WTC11 (cell line): ENCODE measurements at regions of chr18 and their contacts with region 1.

Region 1: GRCh38 chr18:24176727-24177416 is 38.0 kb downstream of the CABYR start:
- DNase-seq: peak; percentile 85
- ATAC-seq: peak; percentile 91
- H3K4me3 Mint-ChIP-seq: no peak overlapping the region
- H3K27ac Mint-ChIP-seq: peak overlapping the region; percentile 74; the same call in 1 of the 2 replicates
- H3K4me1 Mint-ChIP-seq: peaks cover 15% of the 10 kb centered on the region
- H3K27me3 Mint-ChIP-seq: no peaks in the 10 kb centered on the region
- CTCF ChIP-seq: peak; percentile 78

Region 2: DNA sequence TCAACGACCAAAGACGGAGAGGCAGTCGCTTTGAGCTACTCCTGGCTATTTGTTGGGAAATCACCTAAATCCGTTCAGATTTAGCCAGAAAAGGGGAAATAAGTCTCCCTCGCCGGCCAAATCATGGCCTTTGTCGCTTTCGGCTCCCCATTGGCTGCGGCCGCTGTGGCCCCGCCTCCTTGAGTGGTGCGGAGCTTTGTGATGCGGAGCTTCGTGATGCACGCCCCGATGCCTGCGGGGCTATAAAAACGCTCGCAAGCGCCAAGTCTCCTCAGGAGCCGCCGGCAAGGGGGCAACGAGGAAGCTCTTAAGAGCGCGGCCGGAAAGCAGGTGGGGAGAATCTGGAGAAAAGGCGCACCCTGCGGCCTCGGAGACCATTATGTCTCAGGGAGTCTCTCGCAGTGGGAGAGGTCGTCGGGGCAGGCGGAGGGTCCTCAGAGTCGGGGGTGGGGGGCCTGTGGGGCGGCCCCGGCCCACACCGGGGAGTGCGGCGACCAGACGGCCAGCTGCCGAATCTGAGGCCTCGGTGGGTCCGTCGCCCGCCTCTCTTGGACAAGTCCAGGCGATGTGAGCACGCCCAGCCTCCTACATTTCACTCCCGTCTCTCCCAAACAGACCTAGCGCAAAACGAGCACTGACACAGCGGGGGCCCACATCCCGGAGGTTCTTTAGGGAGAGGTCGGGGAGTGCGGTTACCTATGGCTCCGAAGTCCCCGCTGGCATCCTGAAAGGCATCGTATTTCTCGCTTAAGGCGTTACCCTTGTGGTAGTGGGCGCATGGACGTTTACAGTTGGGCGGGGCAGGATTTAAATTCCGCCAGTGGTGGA is 37.9 kb before region 1 on chr18 and contains the start of gene CABYR:
- CTCF ChIA-PET with region 1: interaction called, 20 read pairs
- POLR2A ChIA-PET with region 1: interaction called, 8 read pairs
- DNase-seq: peak; percentile 91
- ATAC-seq: peak; percentile 90
- H3K4me3 Mint-ChIP-seq: peak within 1 kb of the TSS; percentile 79
- H3K27ac Mint-ChIP-seq: peak within 1 kb of the TSS; percentile 98
- H3K4me1 Mint-ChIP-seq: peaks cover 34% of the 10 kb centered on the region
- H3K27me3 Mint-ChIP-seq: no peaks in the 10 kb centered on the region
- CTCF ChIP-seq: no peak
- total RNA-seq, gene CABYR: 12.9 to 19.3 TPM (median 16.1 TPM) in 3 replicates

Region 3: GRCh38 chr18:24189007-24189528 is 12.2 kb after region 1 on chr18:
- CTCF ChIA-PET with region 1: interaction called, 50 read pairs
- POLR2A ChIA-PET with region 1: no interaction called
- DNase-seq: no peak
- ATAC-seq: no peak
- H3K4me3 Mint-ChIP-seq: no peak overlapping the region
- H3K27ac Mint-ChIP-seq: no peak overlapping the region
- H3K4me1 Mint-ChIP-seq: peaks cover 19% of the 10 kb centered on the region
- H3K27me3 Mint-ChIP-seq: no peaks in the 10 kb centered on the region
- CTCF ChIP-seq: no peak

Region 4: GRCh38 chr18:24204904-24205303 is 28.0 kb after region 1 on chr18:
- CTCF ChIA-PET with region 1: interaction called, 13 read pairs
- POLR2A ChIA-PET with region 1: no interaction called
- DNase-seq: no peak
- ATAC-seq: no peak
- H3K4me3 Mint-ChIP-seq: no peak overlapping the region
- H3K27ac Mint-ChIP-seq: peak overlapping the region; percentile 40; the same call in 1 of the 2 replicates
- H3K4me1 Mint-ChIP-seq: peaks cover 17% of the 10 kb centered on the region
- H3K27me3 Mint-ChIP-seq: no peaks in the 10 kb centered on the region
- CTCF ChIP-seq: no peak

Region 5: GRCh38 chr18:24271381-24272331 is 94.8 kb after region 1 on chr18:
- CTCF ChIA-PET with region 1: interaction called, 39 read pairs
- POLR2A ChIA-PET with region 1: no interaction called
- DNase-seq: peak; percentile 88
- ATAC-seq: peak; percentile 95
- H3K4me3 Mint-ChIP-seq: peak overlapping the region; percentile 87
- H3K27ac Mint-ChIP-seq: peak overlapping the region; percentile 57
- H3K4me1 Mint-ChIP-seq: peaks cover 29% of the 10 kb centered on the region
- H3K27me3 Mint-ChIP-seq: no peaks in the 10 kb centered on the region
- CTCF ChIP-seq: no peak

Region 6: DNA sequence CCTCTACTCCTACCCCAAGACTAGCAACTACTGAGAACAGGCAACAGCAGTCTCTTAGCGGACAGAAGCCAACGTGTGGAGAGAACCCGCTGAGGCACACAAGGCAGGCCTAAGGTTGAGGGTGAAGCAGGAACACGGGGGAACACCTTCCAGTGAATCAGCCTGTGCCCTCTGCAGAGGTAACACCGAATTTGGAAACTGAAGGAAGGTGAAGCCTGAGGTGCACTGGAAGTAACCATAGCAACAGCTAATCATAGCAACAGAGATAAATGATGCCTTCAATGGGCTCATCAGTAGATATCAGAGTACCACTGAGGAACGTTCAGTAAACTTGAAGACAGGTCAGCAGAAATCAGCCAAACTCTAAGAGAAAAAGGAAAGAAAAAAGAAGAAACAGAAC is 177.4 kb after region 1 on chr18:
- CTCF ChIA-PET with region 1: interaction called, 20 read pairs
- POLR2A ChIA-PET with region 1: no interaction called
- DNase-seq: no peak
- ATAC-seq: no peak
- H3K4me3 Mint-ChIP-seq: no peak overlapping the region
- H3K27ac Mint-ChIP-seq: no peak overlapping the region
- H3K4me1 Mint-ChIP-seq: peaks cover 36% of the 10 kb centered on the region
- H3K27me3 Mint-ChIP-seq: no peaks in the 10 kb centered on the region
- CTCF ChIP-seq: no peak

Region 7: GRCh38 chr18:24413148-24413547 is 236.3 kb after region 1 on chr18:
- CTCF ChIA-PET with region 1: interaction called, 18 read pairs
- POLR2A ChIA-PET with region 1: no interaction called
- DNase-seq: peak; percentile 58
- ATAC-seq: peak; percentile 85
- H3K4me3 Mint-ChIP-seq: no peak overlapping the region
- H3K27ac Mint-ChIP-seq: no peak overlapping the region
- H3K4me1 Mint-ChIP-seq: peaks cover 19% of the 10 kb centered on the region
- H3K27me3 Mint-ChIP-seq: peaks cover 9% of the 10 kb centered on the region
- CTCF ChIP-seq: no peak